ENCODE measurements at regions of chr14 and their contacts with region 1.

Region 1: GRCh38 chr14:24093901-24094761 is at the start of gene PCK2:
- DNase-seq: peak; percentile 96
- H3K4me3 Mint-ChIP-seq: peak within 1 kb of the TSS; percentile 92
- H3K27ac Mint-ChIP-seq: peak within 1 kb of the TSS; percentile 94
- H3K4me1 Mint-ChIP-seq: peaks cover 27% of the 10 kb centered on the region
- H3K27me3 Mint-ChIP-seq: no peaks in the 10 kb centered on the region
- CTCF ChIP-seq: no peak
- total RNA-seq, gene PCK2: 38.0 and 43.6 TPM in 2 replicates

Region 2: GRCh38 chr14:24013654-24014514 is 80.2 kb before region 1 on chr14:
- CTCF ChIA-PET with region 1: interaction called, 4 read pairs
- intact Hi-C with region 1: loop called (anchors 1 kb)
- DNase-seq: peak; percentile 64
- H3K4me3 Mint-ChIP-seq: no peak overlapping the region
- H3K27ac Mint-ChIP-seq: no peak overlapping the region
- H3K4me1 Mint-ChIP-seq: no peaks in the 10 kb centered on the region
- H3K27me3 Mint-ChIP-seq: peaks cover 43% of the 10 kb centered on the region
- CTCF ChIP-seq: peak; percentile 64

Region 3: DNA sequence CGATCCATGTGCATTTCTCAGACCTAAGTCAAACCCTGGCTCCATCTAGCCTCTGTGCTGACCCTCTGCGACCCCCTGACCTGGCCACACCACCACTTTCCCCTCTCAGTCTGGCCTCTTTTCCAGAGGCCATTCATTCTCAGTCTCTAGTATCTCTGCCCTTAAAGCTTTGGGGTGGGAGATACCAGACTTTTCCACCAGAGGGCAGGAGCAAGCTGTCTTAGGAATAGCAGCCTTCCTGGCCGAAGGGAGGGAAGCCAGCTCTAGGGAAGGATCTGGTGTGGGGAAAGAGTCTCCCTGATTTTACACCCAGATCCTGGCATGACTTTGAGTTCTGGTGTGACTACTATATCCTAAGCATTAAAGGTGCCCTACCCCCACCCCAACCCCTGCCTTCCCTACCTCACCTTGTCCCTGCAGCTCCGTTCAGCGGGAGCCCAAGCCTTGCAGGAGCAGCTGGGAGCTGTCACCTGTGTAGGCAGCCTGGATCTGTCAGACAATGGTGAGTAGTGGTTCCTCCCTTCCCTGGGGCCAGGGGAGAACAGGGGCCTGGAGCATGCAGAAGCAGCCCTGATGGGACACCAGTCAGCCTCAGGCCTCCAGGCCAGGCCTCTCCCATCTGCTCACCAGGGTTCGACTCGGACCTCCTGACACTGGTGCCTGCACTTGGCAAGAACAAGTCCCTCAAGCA is 35.7 kb before region 1 on chr14:
- CTCF ChIA-PET with region 1: interaction called, 68 read pairs
- intact Hi-C with region 1: loop called (anchors 1 kb)
- DNase-seq: peak; percentile 41
- H3K4me3 Mint-ChIP-seq: no peak overlapping the region
- H3K27ac Mint-ChIP-seq: no peak overlapping the region
- H3K4me1 Mint-ChIP-seq: peaks cover 3% of the 10 kb centered on the region
- H3K27me3 Mint-ChIP-seq: peaks cover 68% of the 10 kb centered on the region
- CTCF ChIP-seq: peak; percentile 22

Region 4: DNA sequence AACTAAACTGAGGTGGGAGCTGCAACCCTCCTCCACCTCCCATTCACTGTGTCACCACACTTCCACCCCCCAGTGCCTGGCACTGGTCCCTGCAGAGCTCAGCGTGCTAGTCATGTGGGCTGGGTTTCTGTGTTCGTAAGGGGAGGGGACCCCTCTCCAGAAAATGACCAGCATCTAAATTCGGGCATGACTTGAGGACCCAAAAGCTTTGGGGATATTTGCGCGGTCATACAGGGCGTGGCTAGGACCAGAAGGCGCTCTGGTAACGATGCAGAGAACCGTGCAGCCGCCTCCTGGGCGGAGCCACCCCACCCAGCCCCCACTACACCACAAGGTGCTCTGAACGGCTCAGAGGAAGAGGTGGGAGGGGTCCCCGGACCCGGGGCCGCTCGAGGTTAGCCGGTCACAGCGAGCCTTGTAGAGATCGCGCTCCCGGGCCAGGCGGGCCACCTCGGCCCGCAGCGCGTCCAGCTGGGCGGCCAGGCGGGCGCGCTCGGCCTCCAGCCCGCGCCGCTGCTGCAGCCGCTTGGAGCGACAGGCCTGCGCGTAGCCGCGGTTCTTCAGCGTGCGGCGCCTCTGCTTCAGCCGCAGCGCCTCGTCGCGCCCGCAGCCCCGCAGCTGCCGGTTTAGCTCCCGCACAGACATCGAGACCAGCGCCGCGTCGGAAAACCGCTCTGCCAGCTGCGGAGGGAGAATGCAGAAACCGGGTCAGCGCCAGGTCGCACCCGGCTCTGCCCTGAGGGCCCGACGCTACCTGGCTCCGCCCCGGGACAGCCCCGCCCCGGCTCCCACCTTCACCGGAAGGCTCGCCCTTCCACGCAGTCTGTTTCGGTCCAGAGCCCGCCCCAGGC is 13.0 kb before region 1 on chr14:
- CTCF ChIA-PET with region 1: interaction called, 10 read pairs
- intact Hi-C with region 1: no loop called
- DNase-seq: peak; percentile 72
- H3K4me3 Mint-ChIP-seq: peak overlapping the region; percentile 72
- H3K27ac Mint-ChIP-seq: no peak overlapping the region
- H3K4me1 Mint-ChIP-seq: peaks cover 8% of the 10 kb centered on the region
- H3K27me3 Mint-ChIP-seq: peaks cover 12% of the 10 kb centered on the region
- CTCF ChIP-seq: no peak

Region 5: DNA sequence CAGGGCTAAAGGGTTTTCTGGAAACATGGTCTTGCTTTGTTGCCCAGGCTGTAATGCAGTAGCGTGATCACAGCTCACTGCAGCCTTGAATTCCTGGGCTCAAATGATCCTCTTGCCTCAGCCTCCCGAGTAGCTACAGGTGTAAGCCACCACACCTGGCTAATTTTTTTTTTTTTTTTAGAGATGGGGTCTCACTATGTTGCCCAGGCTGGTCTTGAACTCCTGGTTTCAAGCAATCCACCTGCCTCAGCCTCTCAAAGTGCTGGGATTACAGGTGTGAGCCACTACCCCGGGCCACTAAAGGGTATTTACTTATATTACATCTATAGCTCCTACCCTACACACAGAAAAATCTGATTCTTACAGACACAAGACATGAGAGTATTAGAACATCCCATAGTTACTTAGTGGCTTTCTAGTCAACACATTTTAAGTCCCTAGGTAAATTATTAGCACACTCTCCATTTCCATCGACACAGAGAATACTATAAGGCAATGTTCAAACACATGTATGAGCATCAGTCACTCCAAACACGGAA is 14.3 kb after region 1 on chr14:
- CTCF ChIA-PET with region 1: interaction called, 45 read pairs
- intact Hi-C with region 1: no loop called
- DNase-seq: no peak
- H3K4me3 Mint-ChIP-seq: no peak overlapping the region
- H3K27ac Mint-ChIP-seq: no peak overlapping the region
- H3K4me1 Mint-ChIP-seq: peaks cover 5% of the 10 kb centered on the region
- H3K27me3 Mint-ChIP-seq: no peaks in the 10 kb centered on the region
- CTCF ChIP-seq: no peak

Region 6: DNA sequence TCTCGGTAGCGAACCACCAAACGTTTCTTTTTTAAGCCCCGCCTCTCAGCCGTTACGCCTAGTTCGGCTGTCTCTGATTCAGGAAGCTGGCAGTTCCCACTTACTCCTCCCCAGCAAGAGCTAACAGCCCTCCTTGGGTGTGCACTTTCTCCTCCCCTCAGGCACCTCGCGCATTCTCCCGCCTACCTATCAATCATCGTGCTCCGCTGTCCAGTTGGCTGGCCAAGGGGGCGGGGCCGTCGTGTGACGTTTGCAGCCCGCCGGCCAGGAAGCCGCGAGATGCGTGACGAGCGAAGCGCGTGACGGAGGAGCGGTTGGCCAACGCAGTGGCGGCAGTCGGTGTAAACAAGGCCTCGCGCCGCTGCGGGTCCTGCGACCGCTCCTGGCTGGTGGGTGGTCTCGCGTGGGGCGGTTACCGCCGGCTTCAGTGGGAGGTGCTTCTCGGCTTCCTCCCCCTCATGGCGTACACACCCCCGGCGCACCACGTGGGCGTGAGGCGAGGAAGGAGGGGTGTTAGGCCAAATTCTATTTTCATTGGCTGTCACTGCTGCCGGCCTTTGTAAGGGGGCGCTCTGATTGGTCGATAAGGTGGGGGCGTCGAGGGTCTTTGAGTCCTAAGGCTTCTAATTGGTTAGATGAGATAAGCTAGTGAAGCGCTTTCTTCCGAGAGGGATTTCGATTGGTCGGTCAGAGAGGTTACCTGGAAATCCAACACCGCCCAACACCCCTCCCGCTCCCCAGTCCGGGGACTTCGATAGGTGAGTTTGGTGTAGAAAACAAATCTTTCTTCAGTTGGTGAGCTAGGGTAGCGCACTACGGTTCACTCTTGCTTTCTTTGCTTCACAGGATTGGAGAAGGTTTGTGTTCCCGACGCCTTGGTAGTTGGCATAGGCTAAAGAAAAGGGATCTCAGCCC is 20.7 kb after region 1 on chr14 and contains the starts of genes DCAF11 and NRL:
- CTCF ChIA-PET with region 1: interaction called, 45 read pairs
- intact Hi-C with region 1: no loop called
- DNase-seq: peak; percentile 98
- H3K4me3 Mint-ChIP-seq: peak within 1 kb of the TSS; percentile 82
- H3K27ac Mint-ChIP-seq: peak within 1 kb of the TSS; percentile 98
- H3K4me1 Mint-ChIP-seq: peaks cover 19% of the 10 kb centered on the region
- H3K27me3 Mint-ChIP-seq: no peaks in the 10 kb centered on the region
- CTCF ChIP-seq: no peak
- total RNA-seq, gene DCAF11: 58.2 and 63.4 TPM in 2 replicates
- total RNA-seq, gene NRL: 1.8 and 2.3 TPM in 2 replicates

Region 7: GRCh38 chr14:24192933-24193332 is 98.8 kb after region 1 on chr14:
- CTCF ChIA-PET with region 1: no interaction called
- intact Hi-C with region 1: no loop called
- DNase-seq: no peak
- H3K4me3 Mint-ChIP-seq: no peak overlapping the region
- H3K27ac Mint-ChIP-seq: no peak overlapping the region
- H3K4me1 Mint-ChIP-seq: peaks cover 18% of the 10 kb centered on the region
- H3K27me3 Mint-ChIP-seq: no peaks in the 10 kb centered on the region
- CTCF ChIP-seq: no peak

Region 8: DNA sequence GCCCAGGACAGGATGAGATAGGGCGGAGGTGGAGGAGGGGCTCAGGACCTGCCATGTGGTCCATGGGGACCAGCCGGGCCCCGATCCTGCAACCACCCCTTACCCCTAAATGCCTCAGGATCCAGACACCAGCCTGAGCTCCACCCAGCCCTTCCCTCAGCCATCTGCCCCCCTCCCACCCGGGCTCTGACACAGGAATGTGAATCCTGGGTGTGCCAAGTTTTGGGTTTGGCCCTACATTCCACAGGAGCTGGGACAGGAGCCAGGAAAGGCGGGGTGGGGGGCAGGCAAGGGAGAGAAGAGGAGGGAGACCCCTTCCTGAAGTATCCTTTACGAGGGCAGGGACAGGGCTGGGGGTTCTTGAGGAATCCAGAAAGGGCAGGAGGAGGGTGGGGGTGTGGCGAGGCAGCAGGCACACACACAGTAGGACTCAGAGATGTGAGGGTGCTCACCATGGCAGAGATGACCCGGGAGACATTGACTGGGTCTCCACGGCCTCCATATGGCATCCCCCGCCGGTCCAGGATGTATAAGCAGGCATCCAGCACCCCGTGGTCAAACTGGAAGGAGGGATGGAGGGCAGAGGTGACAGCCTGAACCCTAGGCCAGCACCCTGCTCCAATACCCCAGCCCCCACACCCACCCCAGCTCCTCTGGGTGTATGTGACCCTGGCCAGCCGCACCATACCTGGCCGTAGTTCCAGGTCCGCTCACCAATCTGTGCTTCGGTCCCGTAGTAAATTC is 165.3 kb after region 1 on chr14:
- CTCF ChIA-PET with region 1: no interaction called
- intact Hi-C with region 1: no loop called
- DNase-seq: peak; percentile 37
- H3K4me3 Mint-ChIP-seq: no peak overlapping the region
- H3K27ac Mint-ChIP-seq: no peak overlapping the region
- H3K4me1 Mint-ChIP-seq: no peaks in the 10 kb centered on the region
- H3K27me3 Mint-ChIP-seq: no peaks in the 10 kb centered on the region
- CTCF ChIP-seq: no peak

Measured in Calu3 (cell line).